Activated CD4-positive, alpha-beta memory T cell treated with anti-CD3 and anti-CD28 coated beads for 36 hours (primary cell): ENCODE measurements at regions of chr1 and their contacts with region 1.

Region 1: DNA sequence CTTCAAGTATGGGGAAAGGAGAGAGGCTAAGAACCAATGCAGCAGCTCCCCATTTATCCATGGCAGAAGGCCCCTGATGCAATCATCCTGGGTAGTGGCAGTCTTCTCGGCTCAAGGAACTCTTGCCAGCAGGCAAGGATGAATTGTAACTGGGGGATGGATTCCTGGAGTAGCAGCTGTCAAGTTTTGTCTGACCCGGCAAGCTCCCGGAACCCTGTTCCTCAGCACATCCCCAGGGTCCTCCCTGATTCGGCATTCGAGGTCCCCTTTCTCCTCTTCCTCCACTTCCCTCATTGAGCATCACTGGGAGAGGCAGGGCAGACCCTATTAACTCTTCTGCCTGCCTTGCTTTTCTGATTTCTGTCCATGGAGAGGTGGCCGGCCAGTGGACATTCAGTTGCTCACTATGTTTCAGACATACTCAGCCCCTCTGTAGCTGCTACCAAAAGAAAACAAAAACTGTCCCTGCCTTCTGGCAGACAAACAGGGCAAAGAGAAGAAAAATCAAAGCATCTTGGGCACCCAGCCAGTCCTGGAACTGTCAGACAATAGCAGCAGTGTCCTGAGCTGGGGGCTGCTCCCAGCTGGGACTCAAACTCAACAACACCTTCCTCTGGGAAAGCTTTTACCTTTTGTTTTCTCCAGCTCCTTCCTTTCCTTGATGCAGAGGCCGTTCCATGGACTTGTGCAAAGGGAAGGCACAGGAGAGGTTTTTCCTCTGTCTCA is 5.6 kb upstream of the PTCH2 start:
- DNase-seq: no peak
- H3K4me3 Mint-ChIP-seq: no peak overlapping the region
- H3K27ac Mint-ChIP-seq: no peak overlapping the region
- H3K4me1 Mint-ChIP-seq: peaks cover 12% of the 10 kb centered on the region
- H3K27me3 Mint-ChIP-seq: no peaks in the 10 kb centered on the region

Region 2: DNA sequence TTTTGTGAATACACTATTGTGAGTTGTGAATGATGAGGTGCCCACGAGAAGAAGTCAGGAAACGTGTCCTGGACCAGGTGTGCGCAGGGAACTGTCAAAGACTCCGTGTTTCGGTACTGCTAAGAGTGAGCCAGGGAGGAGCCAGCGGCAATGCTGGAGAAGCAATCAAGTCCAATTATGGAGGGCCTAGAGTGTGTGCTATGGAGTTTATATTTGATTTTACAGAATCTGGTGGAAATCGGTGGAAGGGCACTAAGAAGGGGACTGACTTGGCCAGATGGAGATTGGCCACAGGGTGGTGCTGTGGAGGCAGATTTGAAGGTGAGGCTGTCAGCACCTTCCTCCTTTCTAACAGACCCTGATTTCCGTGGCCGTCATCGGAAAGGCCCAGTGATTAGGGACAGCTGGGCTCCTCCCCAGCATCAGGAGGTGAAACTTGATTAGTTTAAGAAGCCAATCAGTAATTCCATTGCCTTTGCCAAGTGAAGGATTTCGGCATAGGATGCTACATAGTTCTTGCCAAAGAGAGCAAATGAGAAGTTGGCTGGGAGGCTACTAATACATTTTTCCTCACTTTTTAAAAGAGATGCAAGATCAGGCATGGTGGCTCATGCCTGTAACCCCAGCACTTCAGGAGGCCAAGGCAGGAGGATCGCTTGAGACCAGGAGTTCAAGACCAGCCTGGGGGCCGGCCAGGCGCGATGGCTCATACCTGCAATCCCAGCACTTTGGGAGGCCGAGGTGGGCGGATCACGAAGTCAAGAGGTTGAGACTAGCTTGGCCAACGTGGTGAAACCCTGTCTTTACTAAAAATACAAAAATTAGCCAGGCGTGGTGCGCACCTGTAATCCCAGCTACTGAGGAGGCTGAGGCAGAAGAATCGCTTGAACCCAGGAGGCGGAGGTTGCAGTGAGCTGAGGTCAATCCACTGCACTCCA is 12.6 kb before region 1 on chr1:
- CTCF ChIA-PET with region 1: interaction called, 11 read pairs
- POLR2A ChIA-PET with region 1: no interaction called
- intact Hi-C with region 1: no loop called
- DNase-seq: peak; percentile 94
- H3K4me3 Mint-ChIP-seq: no peak overlapping the region
- H3K27ac Mint-ChIP-seq: no peak overlapping the region
- H3K4me1 Mint-ChIP-seq: peaks cover 8% of the 10 kb centered on the region
- H3K27me3 Mint-ChIP-seq: peaks cover 6% of the 10 kb centered on the region

Region 3: DNA sequence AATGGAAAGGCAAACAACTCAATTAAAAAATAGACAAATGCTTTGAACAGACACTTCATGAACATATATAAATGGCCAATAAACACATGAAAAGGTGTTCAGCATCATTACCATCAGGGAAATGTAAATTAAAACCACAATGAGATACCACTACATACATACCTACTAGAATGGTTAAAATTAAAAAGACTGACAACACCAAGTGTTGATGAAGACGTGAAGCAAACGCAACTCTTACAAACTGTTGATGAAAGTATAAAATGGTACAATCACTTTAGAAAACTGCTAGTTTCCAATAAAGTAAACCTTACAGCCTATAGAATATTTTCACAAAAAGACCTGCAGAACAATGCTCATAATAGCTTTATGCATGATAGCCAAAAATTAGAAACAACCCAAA is 127.6 kb after region 1 on chr1:
- CTCF ChIA-PET with region 1: no interaction called
- POLR2A ChIA-PET with region 1: no interaction called
- intact Hi-C with region 1: no loop called
- DNase-seq: no peak
- H3K4me3 Mint-ChIP-seq: no peak overlapping the region
- H3K27ac Mint-ChIP-seq: no peak overlapping the region
- H3K4me1 Mint-ChIP-seq: peaks cover 4% of the 10 kb centered on the region
- H3K27me3 Mint-ChIP-seq: no peaks in the 10 kb centered on the region

Region 4: DNA sequence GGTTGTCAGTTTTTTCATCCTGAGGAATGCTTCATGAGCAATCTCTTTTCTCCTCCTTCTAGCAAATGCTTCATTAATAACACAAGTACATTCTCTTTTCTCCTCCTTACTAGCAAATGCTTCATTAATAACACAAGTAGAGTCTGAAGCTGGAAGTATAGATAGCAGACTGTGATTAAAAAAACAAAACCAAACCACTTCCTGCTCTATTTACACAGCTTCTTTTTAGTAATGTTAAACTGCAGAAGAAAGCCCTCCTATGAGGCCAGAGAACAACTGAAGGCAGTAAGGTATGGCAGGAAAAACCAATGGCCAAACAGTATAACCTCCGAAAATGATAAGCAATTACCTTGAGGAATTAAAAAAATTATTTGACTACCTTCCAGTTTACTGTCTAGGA is 267.7 kb after region 1 on chr1:
- CTCF ChIA-PET with region 1: no interaction called
- POLR2A ChIA-PET with region 1: no interaction called
- intact Hi-C with region 1: no loop called
- DNase-seq: no peak
- H3K4me3 Mint-ChIP-seq: no peak overlapping the region
- H3K27ac Mint-ChIP-seq: no peak overlapping the region
- H3K4me1 Mint-ChIP-seq: peaks cover 26% of the 10 kb centered on the region
- H3K27me3 Mint-ChIP-seq: no peaks in the 10 kb centered on the region